GM12878 (cell line): ENCODE measurements at regions of chr17 and their contacts with region 1.

Region 1: DNA sequence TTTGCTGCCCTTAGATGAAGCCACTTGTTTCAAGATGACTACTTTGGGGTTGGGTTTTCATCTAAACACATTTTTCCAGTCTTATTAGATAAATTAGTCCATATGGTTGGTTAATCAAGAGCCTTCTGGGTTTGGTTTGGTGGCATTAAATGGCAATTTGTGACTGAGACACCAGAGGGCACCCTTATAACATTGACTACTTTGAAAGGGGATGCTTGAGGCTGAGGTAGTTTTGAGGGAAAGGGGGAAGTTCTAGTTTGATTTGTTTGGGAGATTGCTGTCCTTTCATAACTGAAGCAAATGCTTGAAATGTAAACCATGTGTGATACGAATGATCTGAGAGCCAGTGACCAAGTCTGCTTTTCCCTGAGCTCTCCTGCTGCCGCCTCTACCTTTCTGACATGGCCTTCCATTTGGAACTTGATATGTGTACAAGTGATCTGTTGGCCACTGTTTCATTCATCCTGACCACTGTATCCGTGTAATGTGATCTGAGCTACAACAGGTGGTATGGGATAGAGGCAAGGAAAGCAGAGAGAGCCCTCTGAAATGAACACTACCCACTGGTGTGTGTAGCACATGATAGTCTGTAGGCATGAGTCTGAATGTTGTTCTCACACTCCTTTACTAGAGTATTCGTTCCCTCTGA is 5.8 kb upstream of the RARA start:
- DNase-seq: no peak
- ATAC-seq: peak; percentile 83
- H3K4me3 ChIP-seq: no peak overlapping the region
- H3K27ac ChIP-seq: no peak overlapping the region
- H3K4me1 ChIP-seq: peaks cover 5% of the 10 kb centered on the region; the same call in 1 of the 2 replicates
- H3K27me3 ChIP-seq: no peaks in the 10 kb centered on the region
- CTCF ChIP-seq: peak; percentile 62 to 80 (median 68); a peak in 5 of 6 replicates
- EP300 ChIP-seq: no peak
- POLR2A ChIP-seq: no peak; the same call in 1 of the 2 replicates
- RAD21 ChIP-seq: peak; percentile 96

Region 2: GRCh38 chr17:39643271-39643670 is 659.9 kb before region 1 on chr17:
- CTCF ChIA-PET with region 1: no interaction called
- POLR2A ChIA-PET with region 1: no interaction called
- RAD21 ChIA-PET with region 1: no interaction called
- SMC1A ChIA-PET with region 1: no interaction called
- in situ Hi-C with region 1: no loop called
- intact Hi-C with region 1: no loop called
- DNase-seq: no peak
- ATAC-seq: no peak
- H3K4me3 ChIP-seq: no peak overlapping the region
- H3K27ac ChIP-seq: no peak overlapping the region
- H3K4me1 ChIP-seq: peaks cover 11% of the 10 kb centered on the region
- H3K27me3 ChIP-seq: no peaks in the 10 kb centered on the region
- CTCF ChIP-seq: no peak
- EP300 ChIP-seq: no peak
- POLR2A ChIP-seq: no peak
- RAD21 ChIP-seq: no peak

Region 3: GRCh38 chr17:40287494-40288369 is 15.4 kb before region 1 on chr17 and contains the start of gene CDC6:
- CTCF ChIA-PET with region 1: interaction called, 97 read pairs
- POLR2A ChIA-PET with region 1: interaction called, 5 read pairs
- RAD21 ChIA-PET with region 1: interaction called, 7 read pairs
- SMC1A ChIA-PET with region 1: interaction called, 11 read pairs
- in situ Hi-C with region 1: no loop called
- intact Hi-C with region 1: no loop called
- DNase-seq: peak; percentile 95
- ATAC-seq: peak; percentile 96
- H3K4me3 ChIP-seq: peak within 1 kb of the TSS; percentile 80
- H3K27ac ChIP-seq: peak within 1 kb of the TSS; percentile 79
- H3K4me1 ChIP-seq: peaks cover 9% of the 10 kb centered on the region
- H3K27me3 ChIP-seq: no peaks in the 10 kb centered on the region
- CTCF ChIP-seq: no peak
- EP300 ChIP-seq: no peak
- POLR2A ChIP-seq: peak; percentile 97
- RAD21 ChIP-seq: no peak
- polyA plus RNA-seq, gene CDC6: 13.3 to 18.6 TPM

Region 4: DNA sequence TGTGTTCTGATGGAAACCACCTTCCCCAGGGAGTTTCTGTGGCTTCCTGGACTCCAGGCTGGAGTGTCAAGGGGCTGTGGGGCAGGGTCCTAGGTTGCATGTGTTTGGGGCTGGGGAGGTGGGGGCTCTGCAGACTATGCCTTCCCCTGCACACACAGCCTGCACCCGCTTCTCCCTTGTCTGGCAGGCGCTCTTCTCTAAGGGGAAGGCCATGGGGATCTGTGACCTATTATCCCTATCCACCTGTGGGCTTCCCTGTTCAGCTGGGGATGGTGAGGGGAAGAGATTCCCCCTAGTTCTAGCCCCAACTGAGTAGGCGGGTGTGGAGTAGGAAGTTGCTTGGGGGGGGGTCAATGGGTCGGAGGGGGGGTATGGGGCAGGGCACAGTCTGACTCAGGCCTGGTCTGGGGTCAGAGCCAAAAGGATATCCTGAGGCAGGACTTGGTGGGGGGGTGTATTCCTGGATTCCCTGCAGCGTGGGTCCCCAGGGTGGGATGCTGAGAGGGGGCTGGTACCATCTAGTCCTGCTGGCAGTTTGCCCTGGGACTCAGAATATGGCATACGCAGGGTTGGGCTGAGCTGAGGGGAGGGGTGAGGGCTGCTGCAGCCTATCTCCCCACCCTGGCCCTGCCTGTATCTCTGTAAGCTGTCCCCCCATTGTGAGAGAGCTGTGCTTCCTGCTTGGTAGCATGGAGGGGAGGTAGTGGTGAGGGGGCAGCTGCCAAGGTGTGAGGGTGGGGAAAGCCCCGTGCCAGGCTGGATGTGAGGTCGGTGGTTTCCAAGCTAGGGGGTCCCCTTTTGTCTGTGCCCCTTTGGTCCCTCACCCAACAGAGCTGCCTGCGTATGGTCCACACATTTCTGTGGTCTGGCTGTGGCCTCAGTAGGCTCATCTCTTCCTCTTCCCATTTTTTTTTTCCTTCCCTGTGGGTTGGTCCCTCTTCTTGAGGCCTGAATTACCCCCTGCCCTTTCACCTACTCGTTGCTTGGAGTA is 20.6 kb after region 1 on chr17:
- CTCF ChIA-PET with region 1: interaction called, 90 read pairs
- POLR2A ChIA-PET with region 1: interaction called, 123 read pairs
- RAD21 ChIA-PET with region 1: interaction called, 156 read pairs
- SMC1A ChIA-PET with region 1: interaction called, 172 read pairs
- in situ Hi-C with region 1: no loop called
- intact Hi-C with region 1: no loop called
- DNase-seq: no peak
- ATAC-seq: peak; percentile 43
- H3K4me3 ChIP-seq: peak overlapping the region; percentile 91
- H3K27ac ChIP-seq: peak overlapping the region; percentile 96
- H3K4me1 ChIP-seq: peaks cover 68% of the 10 kb centered on the region
- H3K27me3 ChIP-seq: no peaks in the 10 kb centered on the region
- CTCF ChIP-seq: no peak
- EP300 ChIP-seq: no peak
- POLR2A ChIP-seq: peak; percentile 62
- RAD21 ChIP-seq: no peak

Region 5: GRCh38 chr17:40349920-40350909 is 47.1 kb after region 1 on chr17:
- CTCF ChIA-PET with region 1: interaction called, 311 read pairs
- POLR2A ChIA-PET with region 1: interaction called, 9 read pairs
- RAD21 ChIA-PET with region 1: interaction called, 271 read pairs
- SMC1A ChIA-PET with region 1: interaction called, 142 read pairs
- in situ Hi-C with region 1: loop called (anchors 5 kb)
- intact Hi-C with region 1: loop called (anchors 1 kb)
- DNase-seq: no peak
- ATAC-seq: no peak
- H3K4me3 ChIP-seq: no peak overlapping the region
- H3K27ac ChIP-seq: no peak overlapping the region
- H3K4me1 ChIP-seq: peaks cover 26% of the 10 kb centered on the region
- H3K27me3 ChIP-seq: no peaks in the 10 kb centered on the region
- CTCF ChIP-seq: no peak
- EP300 ChIP-seq: no peak
- POLR2A ChIP-seq: no peak
- RAD21 ChIP-seq: no peak

Region 6: GRCh38 chr17:40410082-40410481 is 106.9 kb after region 1 on chr17:
- CTCF ChIA-PET with region 1: interaction called, 22 read pairs
- POLR2A ChIA-PET with region 1: interaction called, 6 read pairs
- RAD21 ChIA-PET with region 1: interaction called, 6 read pairs
- SMC1A ChIA-PET with region 1: interaction called, 22 read pairs
- in situ Hi-C with region 1: no loop called
- intact Hi-C with region 1: no loop called
- DNase-seq: no peak
- ATAC-seq: no peak
- H3K4me3 ChIP-seq: no peak overlapping the region
- H3K27ac ChIP-seq: no peak overlapping the region
- H3K4me1 ChIP-seq: no peaks in the 10 kb centered on the region
- H3K27me3 ChIP-seq: no peaks in the 10 kb centered on the region
- CTCF ChIP-seq: no peak
- EP300 ChIP-seq: no peak
- POLR2A ChIP-seq: no peak
- RAD21 ChIP-seq: no peak